Right ventricle myocardium superior (tissue), 1 donor: ENCODE measurements at regions of chr2 and their contacts with region 1.

Region 1: GRCh38 chr2:182259629-182260150 is 167.1 kb downstream of the PDE1A start:
- DNase-seq: no peak
- ATAC-seq: peak; percentile 38

Region 2: GRCh38 chr2:182066400-182067087 is 193.1 kb before region 1 on chr2:
- intact Hi-C with region 1: no loop called
- DNase-seq: no peak
- ATAC-seq: no peak

Region 3: DNA sequence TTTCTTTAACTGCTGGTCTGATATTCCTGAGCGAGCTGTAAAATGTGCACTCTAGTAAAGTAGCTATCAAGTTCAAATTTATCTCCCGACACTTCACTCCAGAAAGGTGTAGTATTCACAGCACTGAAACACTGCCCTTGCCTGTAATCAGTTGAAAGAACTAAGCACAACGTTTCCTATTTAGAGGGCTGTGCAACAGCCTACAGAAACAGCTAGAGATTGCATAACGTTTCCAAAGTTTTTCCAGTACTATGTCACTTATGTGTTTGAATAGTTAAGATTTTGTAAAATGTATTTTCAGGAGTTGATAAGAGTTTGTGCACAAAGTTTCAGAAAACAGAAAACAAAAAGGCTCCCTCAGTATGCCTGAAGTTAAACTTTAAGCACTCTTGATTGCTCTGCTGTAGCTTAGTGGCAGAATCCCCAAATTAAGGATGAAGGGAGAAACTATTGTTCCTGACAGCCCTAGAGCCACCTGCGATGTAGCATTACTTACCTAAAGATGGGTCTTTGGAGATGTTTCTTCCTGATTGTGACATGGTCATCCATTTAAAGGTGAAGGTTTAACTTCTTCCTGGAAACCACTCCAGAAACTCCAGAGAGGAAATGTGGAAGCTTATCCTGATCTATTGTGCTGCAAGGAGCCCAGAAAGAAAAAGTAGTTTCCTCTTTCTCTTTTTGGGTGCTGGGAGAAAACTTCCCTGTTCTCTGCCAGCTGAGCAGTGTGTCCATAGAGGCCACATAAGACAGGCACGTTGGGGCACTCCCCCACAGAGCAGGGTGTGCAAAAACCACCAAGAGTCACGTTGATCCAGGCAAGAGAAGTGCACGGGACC is 166.6 kb after region 1 on chr2:
- intact Hi-C with region 1: loop called (anchors 10 kb)
- DNase-seq: no peak
- ATAC-seq: peak; percentile 76

Region 4: GRCh38 chr2:182650704-182651103 is 391.0 kb after region 1 on chr2:
- intact Hi-C with region 1: no loop called
- DNase-seq: no peak
- ATAC-seq: peak; percentile 74